ENCODE measurements at regions of chr22 and their contacts with region 1.

Region 1: GRCh38 chr22:46159777-46160176 is 9.5 kb downstream of the PPARA start:
- DNase-seq: no peak
- H3K4me3 ChIP-seq: no peak overlapping the region
- H3K27ac ChIP-seq: no peak overlapping the region
- H3K4me1 ChIP-seq: peaks cover 0 to 11% (median 7%) of the 10 kb centered on the region in 4 donors
- H3K27me3 ChIP-seq: no peaks in the 10 kb centered on the region
- CTCF ChIP-seq: no peak
- EP300 ChIP-seq: no peak
- POLR2A ChIP-seq: no peak

Region 2: GRCh38 chr22:46219636-46220035 is 59.9 kb after region 1 on chr22:
- in situ Hi-C with region 1: no loop called
- intact Hi-C with region 1: loop called (anchors 10 kb)
- DNase-seq: no peak
- H3K4me3 ChIP-seq: no peak overlapping the region
- H3K27ac ChIP-seq: no peak overlapping the region
- H3K4me1 ChIP-seq: no peaks in the 10 kb centered on the region
- H3K27me3 ChIP-seq: no peaks in the 10 kb centered on the region
- CTCF ChIP-seq: no peak
- EP300 ChIP-seq: no peak
- POLR2A ChIP-seq: no peak